Activated naive CD8-positive, alpha-beta T cell treated with anti-CD3 and anti-CD28 coated beads, Interleukin-2, amount 10 ng/mL, durations not matched to agents 7 days and 5 days (primary cell): ENCODE measurements at regions of chr1 and their contacts with region 1.

Region 1: DNA sequence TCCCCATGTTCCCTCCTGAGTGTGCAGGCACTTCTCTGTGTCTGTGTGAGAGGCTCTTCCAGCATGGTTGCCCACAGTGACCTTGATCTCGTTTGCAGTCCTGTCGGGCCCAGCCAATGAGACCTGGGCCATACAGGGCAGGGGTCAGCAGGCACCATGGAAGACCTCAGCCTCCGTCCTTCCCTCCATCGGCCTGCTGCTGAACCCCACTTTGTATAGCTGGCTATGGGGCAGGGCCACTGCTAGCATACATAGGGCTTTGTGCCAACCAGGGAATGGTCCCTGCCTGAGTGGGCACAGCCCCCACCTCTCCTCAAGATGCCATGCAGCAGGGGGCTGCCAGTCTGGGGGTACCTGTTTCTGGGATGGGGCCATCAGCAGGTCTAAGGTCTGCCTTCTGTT is 3.8 kb downstream of the C1orf35 start:
- DNase-seq: no peak
- ATAC-seq: no peak
- H3K4me3 Mint-ChIP-seq: no peak overlapping the region
- H3K27ac Mint-ChIP-seq: no peak overlapping the region
- H3K4me1 Mint-ChIP-seq: peaks cover 14% of the 10 kb centered on the region
- H3K27me3 Mint-ChIP-seq: no peaks in the 10 kb centered on the region

Region 2: DNA sequence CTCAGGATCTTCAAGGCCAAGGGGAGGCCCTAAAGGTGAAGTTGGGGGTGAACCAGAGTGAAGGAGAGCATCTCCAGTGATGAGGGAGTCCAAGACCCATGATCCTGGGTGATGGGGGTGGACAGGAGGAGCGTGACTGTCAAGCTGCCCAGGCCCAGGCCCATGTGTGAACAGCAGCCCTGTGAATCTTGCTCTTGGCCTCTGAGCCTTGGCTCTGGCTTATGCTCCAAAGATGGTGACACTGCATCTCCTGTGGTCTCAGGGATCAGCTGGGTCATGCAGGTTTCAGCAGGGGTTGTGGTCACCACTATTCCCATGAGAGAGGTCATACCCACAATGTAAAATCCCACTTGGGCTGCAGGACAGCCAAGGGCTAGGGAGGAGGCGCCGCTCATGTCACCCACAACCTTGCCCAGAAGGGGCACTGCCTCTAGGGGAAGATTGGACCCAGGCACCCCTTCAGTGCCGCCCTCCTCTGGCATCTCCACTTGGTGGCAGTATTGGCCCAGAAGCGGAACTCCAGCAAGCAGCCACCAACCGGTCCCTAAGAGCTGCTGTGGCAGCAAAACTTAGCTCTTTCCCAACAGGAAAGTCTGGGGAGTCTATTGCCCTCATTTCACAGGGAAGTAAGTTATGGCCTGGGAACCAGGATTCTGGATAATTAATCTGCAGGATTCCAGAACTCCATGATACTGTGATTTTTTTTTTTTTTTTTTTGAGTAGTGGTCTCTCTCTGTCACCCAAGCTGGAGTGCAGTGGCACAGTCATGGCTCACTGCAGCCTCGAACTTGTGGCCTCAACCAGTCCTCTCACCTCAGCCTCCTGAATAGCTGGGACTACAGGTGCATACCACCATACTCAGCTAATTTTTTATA is 100.0 kb before region 1 on chr1:
- POLR2A ChIA-PET with region 1: no interaction called
- DNase-seq: peak; percentile 68
- ATAC-seq: peak; percentile 92
- H3K4me3 Mint-ChIP-seq: no peak overlapping the region
- H3K27ac Mint-ChIP-seq: no peak overlapping the region
- H3K4me1 Mint-ChIP-seq: no peaks in the 10 kb centered on the region
- H3K27me3 Mint-ChIP-seq: peaks cover 31% of the 10 kb centered on the region

Region 3: GRCh38 chr1:228082135-228082891 is 17.0 kb before region 1 on chr1 and contains the start of gene ARF1:
- POLR2A ChIA-PET with region 1: interaction called, 12 read pairs
- DNase-seq: peak; percentile 100
- ATAC-seq: peak; percentile 90
- H3K4me3 Mint-ChIP-seq: peak within 1 kb of the TSS; percentile 95
- H3K27ac Mint-ChIP-seq: peak within 1 kb of the TSS; percentile 96
- H3K4me1 Mint-ChIP-seq: peaks cover 37% of the 10 kb centered on the region
- H3K27me3 Mint-ChIP-seq: no peaks in the 10 kb centered on the region
- total RNA-seq, gene ARF1: 266 to 284 TPM